Breast epithelium (tissue), 4 donors: ENCODE measurements at regions of chr16 and their contacts with region 1.

Region 1: DNA sequence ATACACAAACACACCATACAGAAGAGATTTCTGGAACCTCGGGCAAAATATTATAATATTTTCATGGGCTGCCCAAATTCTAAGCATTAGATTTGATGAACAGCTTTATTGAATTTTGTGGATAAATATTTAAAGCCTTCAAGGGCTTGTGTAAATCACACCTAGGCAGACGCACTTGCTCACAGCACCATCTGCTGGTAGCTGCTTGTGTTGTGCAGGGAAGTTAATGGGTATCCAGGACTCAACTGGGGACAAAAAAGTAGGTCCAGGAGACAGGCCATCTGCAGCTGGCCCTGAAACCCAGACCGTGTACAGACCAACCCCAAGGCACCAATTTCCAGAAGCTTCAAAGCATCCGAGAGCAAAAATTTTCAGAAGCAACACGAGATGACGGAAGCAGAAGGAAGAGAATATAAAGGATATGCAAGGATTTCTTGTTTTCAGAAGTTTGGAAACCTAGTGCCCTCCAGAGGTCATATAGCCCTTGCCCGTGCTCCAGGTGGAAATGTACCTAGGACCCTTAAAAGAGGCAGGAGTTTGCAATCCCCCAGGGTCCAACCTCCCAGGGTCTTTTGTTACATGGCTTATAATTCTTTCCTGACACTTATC is 140.0 kb downstream of the CHD9NB start:
- DNase-seq: peak; percentile 54 to 64
- H3K4me3 ChIP-seq: no peak overlapping the region
- H3K27ac ChIP-seq: no peak overlapping the region
- H3K4me1 ChIP-seq: no peaks in the 10 kb centered on the region
- H3K27me3 ChIP-seq: no peaks in the 10 kb centered on the region
- CTCF ChIP-seq: peak; percentile 17 to 74 (median 48)
- POLR2A ChIP-seq: no peak

Region 2: GRCh38 chr16:52191531-52192134 is 721.0 kb before region 1 on chr16:
- intact Hi-C with region 1: loop called (anchors 5 kb)
- DNase-seq: peak; percentile 39 to 63
- H3K4me3 ChIP-seq: no peak overlapping the region
- H3K27ac ChIP-seq: no peak overlapping the region
- H3K4me1 ChIP-seq: no peaks in the 10 kb centered on the region
- H3K27me3 ChIP-seq: no peaks in the 10 kb centered on the region
- CTCF ChIP-seq: peak; percentile 86 to 89 (median 87)
- POLR2A ChIP-seq: no peak

Region 3: DNA sequence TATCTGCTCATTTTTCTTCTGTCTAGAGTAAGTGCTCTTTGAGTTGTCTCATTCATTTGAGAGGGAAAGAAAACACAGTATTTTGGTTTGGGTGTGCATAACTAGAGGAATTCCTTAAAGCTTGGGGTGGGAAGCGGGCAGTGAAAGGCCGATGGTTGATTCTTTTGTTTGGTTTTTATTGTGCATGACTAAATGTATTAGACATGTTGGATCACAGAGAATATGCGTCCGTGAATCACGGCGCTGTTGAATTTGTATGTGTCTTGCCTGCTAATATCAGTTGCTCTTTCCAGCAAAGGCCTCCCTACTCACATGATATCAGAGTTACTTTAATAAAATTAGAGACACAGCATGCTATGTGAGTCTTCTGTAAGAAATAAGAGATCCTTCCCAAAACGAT is 39.9 kb before region 1 on chr16:
- intact Hi-C with region 1: no loop called
- DNase-seq: no peak
- H3K4me3 ChIP-seq: no peak overlapping the region
- H3K27ac ChIP-seq: no peak overlapping the region
- H3K4me1 ChIP-seq: no peaks in the 10 kb centered on the region
- H3K27me3 ChIP-seq: no peaks in the 10 kb centered on the region
- CTCF ChIP-seq: no peak
- POLR2A ChIP-seq: no peak